BJ (cell line): ENCODE measurements at regions of chr3 and their contacts with region 1.

Region 1: GRCh38 chr3:193780810-193781472 is 187.9 kb downstream of the OPA1 start:
- DNase-seq: no peak
- H3K4me3 ChIP-seq: no peak overlapping the region
- H3K27me3 ChIP-seq: peaks cover 22% of the 10 kb centered on the region
- CTCF ChIP-seq: peak; percentile 92

Region 2: GRCh38 chr3:194134757-194135528 is 354.0 kb after region 1 on chr3:
- CTCF ChIA-PET with region 1: interaction called, 31 read pairs
- POLR2A ChIA-PET with region 1: no interaction called
- DNase-seq: peak; percentile 77
- H3K4me3 ChIP-seq: peak overlapping the region; percentile 56
- H3K27me3 ChIP-seq: peaks cover 1% of the 10 kb centered on the region; the same call in 1 of the 2 replicates
- CTCF ChIP-seq: no peak